PC-9 (cell line): ENCODE measurements at regions of chr6 and their contacts with region 1.

Region 1: DNA sequence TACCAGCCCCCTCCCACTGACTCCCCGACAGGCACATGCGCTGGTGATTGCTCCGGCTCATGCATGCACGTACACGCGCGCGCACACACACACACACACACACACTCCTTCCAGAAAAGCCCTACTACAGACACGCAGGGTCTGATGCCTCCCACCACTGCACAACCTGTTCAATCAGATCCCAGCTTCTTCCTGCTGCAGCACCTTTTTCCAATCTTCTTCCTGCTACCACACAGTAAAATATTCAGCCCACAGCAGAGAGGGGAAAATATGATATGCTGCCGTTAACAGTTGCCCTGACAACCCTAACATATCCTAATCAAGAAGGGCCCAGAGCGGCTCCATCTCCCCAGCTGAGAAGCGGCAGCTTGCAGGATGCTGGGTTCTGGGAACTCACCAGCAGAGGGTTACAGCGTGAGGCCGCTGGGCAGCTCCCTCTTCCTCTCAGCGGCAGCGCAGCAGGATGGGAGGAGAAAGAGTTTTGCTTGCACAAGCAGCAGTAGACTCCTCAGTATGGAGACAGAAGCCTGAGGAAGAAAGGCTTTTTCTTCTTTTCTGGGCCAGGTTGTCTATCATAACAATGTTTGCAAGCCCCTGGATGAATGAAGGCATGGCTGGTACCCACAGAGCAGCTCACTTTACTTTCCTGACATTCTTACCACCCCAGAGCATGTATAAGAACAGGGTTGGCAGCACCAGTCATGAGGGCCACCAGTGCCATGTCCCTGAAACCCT is 23.9 kb downstream of the MAP7 start:
- DNase-seq: no peak
- H3K4me3 ChIP-seq: no peak overlapping the region
- H3K27ac ChIP-seq: no peak overlapping the region
- H3K4me1 ChIP-seq: 0 out of 2 replicates have a peak, but pooled peaks cover under 1% of the 10 kb centered on the region
- H3K27me3 ChIP-seq: no peaks in the 10 kb centered on the region
- CTCF ChIP-seq: no peak

Region 2: DNA sequence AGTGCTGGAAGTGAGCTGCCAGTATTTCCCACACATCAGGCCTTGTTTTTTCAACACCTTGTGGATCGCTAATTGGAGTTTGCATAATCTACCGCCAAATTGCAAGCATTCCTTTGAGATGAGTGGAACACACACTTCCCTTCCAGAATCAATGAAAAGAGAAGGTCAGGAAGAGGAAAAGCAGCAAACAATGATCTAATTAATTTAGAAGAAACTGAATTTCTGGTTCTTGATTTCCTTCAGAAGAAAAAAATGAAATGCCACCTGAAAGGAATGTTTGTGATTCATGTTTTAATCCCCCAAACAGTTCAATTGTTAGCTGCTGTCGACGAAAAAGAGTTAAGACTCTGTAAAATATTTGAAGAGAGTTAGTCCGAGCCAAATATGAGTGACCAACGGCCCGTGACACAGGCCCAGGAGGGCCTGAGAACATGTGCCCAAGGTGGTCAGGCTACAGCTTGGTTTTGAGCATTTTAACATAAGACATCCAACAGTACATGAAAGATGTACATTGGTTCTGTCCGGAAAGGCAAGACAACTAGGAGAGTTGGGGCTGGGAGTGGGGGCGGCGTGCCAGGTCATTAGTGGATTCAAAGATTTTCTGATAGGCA is 458.5 kb before region 1 on chr6:
- CTCF ChIA-PET with region 1: no interaction called
- POLR2A ChIA-PET with region 1: no interaction called
- intact Hi-C with region 1: no loop called
- DNase-seq: peak; percentile 43 to 95
- H3K4me3 ChIP-seq: no peak overlapping the region
- H3K27ac ChIP-seq: peak overlapping the region; percentile 88
- H3K4me1 ChIP-seq: peaks cover 39% of the 10 kb centered on the region
- H3K27me3 ChIP-seq: no peaks in the 10 kb centered on the region
- CTCF ChIP-seq: no peak

Region 3: GRCh38 chr6:136274062-136274461 is 252.3 kb before region 1 on chr6:
- CTCF ChIA-PET with region 1: no interaction called
- POLR2A ChIA-PET with region 1: interaction called, 12 read pairs
- intact Hi-C with region 1: no loop called
- DNase-seq: no peak
- H3K4me3 ChIP-seq: no peak overlapping the region
- H3K27ac ChIP-seq: no peak overlapping the region
- H3K4me1 ChIP-seq: no peaks in the 10 kb centered on the region
- H3K27me3 ChIP-seq: no peaks in the 10 kb centered on the region
- CTCF ChIP-seq: no peak

Region 4: DNA sequence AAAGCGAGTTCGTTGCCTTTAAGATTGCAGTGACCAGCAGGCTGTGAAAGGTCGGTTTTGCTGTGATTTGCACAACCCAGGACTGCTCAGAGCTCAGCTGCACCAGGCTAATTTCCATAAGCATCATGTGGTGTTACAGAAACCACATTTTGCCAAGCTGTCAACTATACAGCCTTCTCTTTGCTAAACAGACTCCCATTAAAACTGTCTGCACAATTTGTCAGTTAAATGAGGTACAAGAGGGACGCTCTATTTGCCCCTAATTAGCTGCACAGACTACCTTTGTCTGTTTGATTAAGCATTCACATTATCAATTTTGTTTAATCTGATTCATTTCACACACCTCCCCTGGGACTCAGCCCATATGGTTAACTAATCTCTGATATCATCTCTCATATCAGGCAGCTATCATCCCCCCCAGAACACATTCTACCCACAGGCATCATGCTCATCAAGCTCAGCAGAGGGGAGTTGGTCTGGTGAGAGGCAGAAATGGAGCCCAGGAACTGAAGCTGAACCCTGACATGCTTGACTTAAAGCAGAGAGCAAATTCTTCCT is 905.8 kb after region 1 on chr6:
- CTCF ChIA-PET with region 1: no interaction called
- POLR2A ChIA-PET with region 1: no interaction called
- intact Hi-C with region 1: no loop called
- DNase-seq: no peak
- H3K4me3 ChIP-seq: no peak overlapping the region
- H3K27ac ChIP-seq: no peak overlapping the region
- H3K4me1 ChIP-seq: no peaks in the 10 kb centered on the region
- H3K27me3 ChIP-seq: no peaks in the 10 kb centered on the region
- CTCF ChIP-seq: no peak